ENCODE measurements at regions of chr6 and their contacts with region 1.

Region 1: GRCh38 chr6:168895102-168895812 is 358.4 kb downstream of the THBS2 start:
- DNase-seq: peak; percentile 71 to 86
- H3K4me3 ChIP-seq: no peak overlapping the region
- H3K4me1 ChIP-seq: no peaks in the 10 kb centered on the region
- H3K27me3 ChIP-seq: no peaks in the 10 kb centered on the region

Region 2: DNA sequence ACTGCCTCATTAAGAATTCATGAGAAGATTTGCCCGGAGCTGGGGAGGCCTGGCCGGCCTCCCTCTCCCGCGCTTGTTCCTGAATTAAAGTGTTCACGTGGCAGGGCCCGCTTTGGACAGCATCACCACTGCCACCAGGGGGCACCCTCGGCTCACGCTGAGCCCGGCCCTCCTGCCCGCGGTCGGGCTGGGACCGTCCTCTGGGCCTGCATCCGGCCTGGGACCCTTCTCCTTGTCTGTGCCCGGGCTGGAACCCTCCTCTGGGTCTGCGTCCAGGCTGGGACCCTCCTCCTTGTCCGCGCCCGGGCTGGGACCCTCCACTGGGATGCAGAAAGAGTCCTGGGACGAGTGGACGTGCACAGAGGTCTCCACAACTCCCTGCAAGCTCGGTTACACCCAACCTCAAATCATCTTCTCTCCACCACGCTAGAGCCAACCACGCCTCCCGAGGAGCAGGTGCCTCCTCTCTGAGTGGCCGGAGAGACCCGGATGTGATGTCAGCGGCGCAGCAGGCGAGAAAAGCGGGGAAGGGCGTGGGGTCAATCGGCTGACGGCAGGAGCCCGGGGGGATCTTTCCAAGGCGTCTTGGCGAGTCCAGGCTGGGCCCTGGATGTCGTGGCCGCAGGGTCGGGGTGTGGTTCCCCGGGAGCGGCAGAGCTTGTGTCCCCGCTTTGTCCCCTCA is 524.8 kb before region 1 on chr6:
- in situ Hi-C with region 1: loop called (anchors 25 kb)
- DNase-seq: peak; percentile 36 to 84
- H3K4me3 ChIP-seq: no peak overlapping the region
- H3K4me1 ChIP-seq: no peaks in the 10 kb centered on the region
- H3K27me3 ChIP-seq: no peaks in the 10 kb centered on the region

Region 3: GRCh38 chr6:169069356-169069755 is 174.1 kb after region 1 on chr6:
- in situ Hi-C with region 1: no loop called
- DNase-seq: no peak
- H3K4me3 ChIP-seq: no peak overlapping the region
- H3K4me1 ChIP-seq: no peaks in the 10 kb centered on the region
- H3K27me3 ChIP-seq: no peaks in the 10 kb centered on the region